ENCODE measurements at regions of chr14 and their contacts with region 1.

Region 1: DNA sequence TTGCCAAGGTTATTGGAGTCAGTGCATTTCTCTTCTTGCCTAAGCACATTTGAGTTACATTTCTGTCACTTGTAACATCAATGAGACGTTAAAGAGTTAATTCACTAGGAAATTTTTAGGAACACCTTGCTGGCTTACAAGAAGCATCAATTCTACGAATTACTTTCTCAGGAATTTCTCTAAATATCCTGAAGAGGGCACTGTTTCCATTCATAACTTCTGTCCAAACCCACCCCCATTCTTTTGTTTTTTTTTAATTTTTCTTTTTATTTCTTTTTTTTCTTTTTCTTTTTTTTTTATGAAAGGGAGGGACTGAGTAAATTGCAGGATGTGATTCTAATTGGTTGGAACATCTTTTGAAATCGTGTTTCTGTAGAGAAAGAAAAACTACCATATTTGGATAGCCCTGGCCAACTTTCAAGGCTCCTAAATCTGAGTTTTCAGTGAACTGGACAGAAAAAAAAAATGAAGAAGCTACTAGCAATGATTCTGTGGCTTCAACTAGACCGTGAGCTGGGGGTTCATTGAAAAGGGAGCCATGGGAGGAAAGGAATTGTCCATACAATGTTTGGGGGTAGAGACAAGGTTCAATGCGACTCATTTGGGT is 285.3 kb downstream of the DAD1 start:
- DNase-seq: no peak
- ATAC-seq: 0 out of 6 replicates have a peak, but pooled peaks of 1 of the 2 experiments have one; percentile 47
- H3K4me3 ChIP-seq: no peak overlapping the region
- H3K27ac ChIP-seq: no peak overlapping the region
- H3K4me1 ChIP-seq: no peaks in the 10 kb centered on the region
- CTCF ChIP-seq: peak; percentile 60
- EP300 ChIP-seq: no peak
- POLR2A ChIP-seq: no peak
- RAD21 ChIP-seq: peak; percentile 45; a peak in 3 of 5 replicates

Region 2: GRCh38 chr14:22314181-22314820 is 10.6 kb after region 1 on chr14:
- CTCF ChIA-PET with region 1: interaction called, 25 read pairs
- POLR2A ChIA-PET with region 1: no interaction called
- DNase-seq: peak; percentile 46 to 71
- ATAC-seq: peak; percentile 95 to 97
- H3K4me3 ChIP-seq: no peak overlapping the region
- H3K27ac ChIP-seq: no peak overlapping the region
- H3K4me1 ChIP-seq: no peaks in the 10 kb centered on the region
- CTCF ChIP-seq: peak; percentile 78
- EP300 ChIP-seq: no peak
- POLR2A ChIP-seq: no peak
- RAD21 ChIP-seq: peak; percentile 77 to 78

Region 3: DNA sequence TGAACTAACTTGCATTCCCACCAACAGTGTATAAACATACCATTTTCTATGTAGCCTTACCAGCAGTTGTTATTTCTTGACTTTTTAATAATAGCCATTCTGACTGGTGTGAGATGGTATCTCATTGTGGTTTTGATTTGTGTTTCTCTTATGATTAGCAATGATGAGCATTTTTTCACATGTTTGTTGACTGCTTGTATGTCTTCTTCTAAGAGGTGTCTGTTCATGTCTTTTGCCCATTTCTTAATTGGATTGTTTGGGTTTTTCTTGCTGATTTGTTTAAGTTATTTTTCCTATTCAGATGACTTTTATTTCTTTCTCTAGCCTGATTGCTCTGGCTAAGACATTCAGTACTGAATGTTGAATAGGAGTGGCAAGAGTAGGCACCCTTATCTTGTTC is 55.0 kb after region 1 on chr14:
- CTCF ChIA-PET with region 1: no interaction called
- POLR2A ChIA-PET with region 1: no interaction called
- DNase-seq: no peak
- ATAC-seq: no peak
- H3K4me3 ChIP-seq: no peak overlapping the region
- H3K27ac ChIP-seq: no peak overlapping the region
- H3K4me1 ChIP-seq: no peaks in the 10 kb centered on the region
- CTCF ChIP-seq: no peak
- EP300 ChIP-seq: no peak
- POLR2A ChIP-seq: no peak
- RAD21 ChIP-seq: no peak

Measured in A549 (cell line).